ENCODE measurements at regions of chr2 and their contacts with region 1.

Region 1: GRCh38 chr2:74876081-74876886 is 42.4 kb downstream of the HK2 start:
- DNase-seq: peak in 1 of 2 donors; percentile 24
- ATAC-seq: peak; percentile 68

Region 2: GRCh38 chr2:74481936-74482800 is 394.1 kb before region 1 on chr2:
- intact Hi-C with region 1: no loop called
- DNase-seq: peak in 1 of 2 donors; percentile 43
- ATAC-seq: peak; percentile 53

Region 3: GRCh38 chr2:74715078-74715791 is 161.0 kb before region 1 on chr2:
- intact Hi-C with region 1: loop called (anchors 2 to 10 kb)
- DNase-seq: peak; percentile 82 to 90
- ATAC-seq: peak; percentile 79

Measured in left colon (tissue), 2 donors.